Left colon (tissue), 2 donors: ENCODE measurements at regions of chr3 and their contacts with region 1.

Region 1: DNA sequence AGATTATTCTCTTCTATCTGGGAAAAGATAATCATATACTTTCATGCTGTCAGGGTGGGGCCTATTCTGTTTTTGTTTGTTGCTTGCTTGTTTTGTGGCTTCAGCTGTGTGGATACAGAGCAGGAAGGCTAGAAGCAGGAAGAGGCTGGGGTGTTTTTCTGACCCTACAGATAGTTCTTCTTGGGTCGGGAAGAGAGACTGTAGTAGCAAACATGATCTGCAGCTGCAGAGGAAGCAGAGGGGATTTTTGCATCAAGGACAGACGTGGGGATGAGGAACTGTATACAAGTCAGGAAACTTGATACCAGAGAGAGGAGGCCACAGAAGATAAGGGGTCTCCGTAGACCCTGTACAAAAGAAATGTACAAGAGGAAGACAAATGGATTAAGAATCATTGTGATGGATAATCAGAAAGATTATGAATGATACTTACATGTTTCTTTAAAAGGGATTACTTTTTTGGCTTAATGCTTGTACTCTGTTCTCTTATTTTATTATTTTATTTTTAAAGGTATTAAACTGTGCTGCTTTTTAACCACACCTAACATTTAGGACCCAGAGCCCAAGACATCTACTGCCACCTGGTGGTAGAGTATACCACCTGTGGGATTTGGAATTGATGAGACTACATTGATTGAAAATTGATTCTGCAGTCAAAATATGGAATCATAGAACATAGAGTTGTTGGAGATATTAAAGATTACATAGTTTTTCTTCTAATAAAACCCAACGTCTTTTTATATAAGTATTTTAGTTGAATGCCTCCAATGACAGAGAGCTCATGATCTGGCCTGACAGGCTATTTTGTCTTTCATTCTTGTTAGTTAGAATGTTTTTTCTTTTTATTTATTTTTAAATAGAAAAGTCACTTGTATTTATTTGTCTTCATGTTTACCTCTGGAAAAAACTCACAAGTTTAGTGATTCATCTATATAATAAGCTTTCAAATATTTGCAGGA is 87.3 kb upstream of the ROPN1 start:
- DNase-seq: peak in 1 of 2 donors; percentile 16
- ATAC-seq: peak; percentile 63

Region 2: DNA sequence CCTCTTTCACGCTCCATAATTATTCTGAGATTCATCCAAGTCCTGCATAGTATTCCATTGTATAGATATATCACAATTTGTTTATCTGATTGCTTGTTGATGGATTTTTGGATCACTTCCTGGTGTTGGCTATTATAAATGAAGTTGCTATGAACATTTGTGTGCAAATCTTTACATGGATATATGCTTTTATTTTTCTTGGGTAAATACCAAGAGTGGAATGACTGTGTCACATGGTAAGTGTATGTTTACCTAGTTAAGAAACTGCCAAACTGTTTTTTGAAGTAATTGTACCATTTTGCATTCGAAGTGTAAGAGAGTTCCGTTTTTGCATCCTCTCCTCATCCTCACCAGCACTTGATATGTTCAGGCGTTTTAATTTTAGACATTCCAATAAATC is 52.7 kb before region 1 on chr3:
- intact Hi-C with region 1: loop called in 1 of 2 experiments (anchors 10 kb)
- DNase-seq: no peak
- ATAC-seq: peak; percentile 59